WTC11 (cell line): ENCODE measurements at regions of chr1 and their contacts with region 1.

Region 1: DNA sequence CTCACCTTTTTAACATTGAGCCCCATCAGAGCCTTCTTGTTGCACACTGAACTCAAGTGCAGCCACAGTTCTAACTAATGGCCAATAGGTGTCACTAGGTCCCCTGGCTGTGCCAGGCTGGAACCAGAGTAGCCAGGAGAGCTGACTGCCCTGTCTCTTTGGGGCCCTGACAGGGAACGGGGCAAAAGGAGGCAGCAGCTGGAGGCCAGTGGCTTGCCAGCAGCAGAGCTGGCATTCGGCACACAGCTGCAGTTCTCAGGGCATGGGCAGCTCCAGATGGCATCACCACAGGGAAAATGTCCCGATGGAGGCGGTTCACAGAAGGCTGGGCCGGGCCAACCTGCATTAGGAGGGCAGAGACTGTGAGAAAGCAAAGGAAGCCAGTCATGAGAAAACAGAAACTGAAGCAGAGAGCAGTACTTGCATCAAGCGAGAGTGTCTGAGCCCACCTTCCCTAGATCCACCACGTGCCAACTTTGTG is 188.6 kb downstream of the FCRL5 start:
- DNase-seq: peak; percentile 47
- ATAC-seq: peak; percentile 96
- H3K4me3 Mint-ChIP-seq: no peak overlapping the region
- H3K27ac Mint-ChIP-seq: no peak overlapping the region
- H3K4me1 Mint-ChIP-seq: peaks cover 17% of the 10 kb centered on the region
- H3K27me3 Mint-ChIP-seq: no peaks in the 10 kb centered on the region; the same call in 1 of the 2 replicates
- CTCF ChIP-seq: no peak; the same call in 1 of the 2 replicates

Region 2: GRCh38 chr1:157312082-157312812 is 51.5 kb before region 1 on chr1:
- CTCF ChIA-PET with region 1: interaction called, 11 read pairs
- POLR2A ChIA-PET with region 1: no interaction called
- DNase-seq: no peak
- ATAC-seq: no peak
- H3K4me3 Mint-ChIP-seq: no peak overlapping the region
- H3K27ac Mint-ChIP-seq: no peak overlapping the region
- H3K4me1 Mint-ChIP-seq: peaks cover 28% of the 10 kb centered on the region
- H3K27me3 Mint-ChIP-seq: peaks cover 3% of the 10 kb centered on the region
- CTCF ChIP-seq: no peak

Region 3: GRCh38 chr1:157562515-157562914 is 198.8 kb after region 1 on chr1:
- CTCF ChIA-PET with region 1: no interaction called
- POLR2A ChIA-PET with region 1: no interaction called
- DNase-seq: no peak
- ATAC-seq: peak; percentile 41
- H3K4me3 Mint-ChIP-seq: no peak overlapping the region
- H3K27ac Mint-ChIP-seq: peak overlapping the region; percentile 6
- H3K4me1 Mint-ChIP-seq: peaks cover 59% of the 10 kb centered on the region
- H3K27me3 Mint-ChIP-seq: no peaks in the 10 kb centered on the region; the same call in 1 of the 2 replicates
- CTCF ChIP-seq: no peak